ENCODE measurements at regions of chr7 and their contacts with region 1.

Region 1: DNA sequence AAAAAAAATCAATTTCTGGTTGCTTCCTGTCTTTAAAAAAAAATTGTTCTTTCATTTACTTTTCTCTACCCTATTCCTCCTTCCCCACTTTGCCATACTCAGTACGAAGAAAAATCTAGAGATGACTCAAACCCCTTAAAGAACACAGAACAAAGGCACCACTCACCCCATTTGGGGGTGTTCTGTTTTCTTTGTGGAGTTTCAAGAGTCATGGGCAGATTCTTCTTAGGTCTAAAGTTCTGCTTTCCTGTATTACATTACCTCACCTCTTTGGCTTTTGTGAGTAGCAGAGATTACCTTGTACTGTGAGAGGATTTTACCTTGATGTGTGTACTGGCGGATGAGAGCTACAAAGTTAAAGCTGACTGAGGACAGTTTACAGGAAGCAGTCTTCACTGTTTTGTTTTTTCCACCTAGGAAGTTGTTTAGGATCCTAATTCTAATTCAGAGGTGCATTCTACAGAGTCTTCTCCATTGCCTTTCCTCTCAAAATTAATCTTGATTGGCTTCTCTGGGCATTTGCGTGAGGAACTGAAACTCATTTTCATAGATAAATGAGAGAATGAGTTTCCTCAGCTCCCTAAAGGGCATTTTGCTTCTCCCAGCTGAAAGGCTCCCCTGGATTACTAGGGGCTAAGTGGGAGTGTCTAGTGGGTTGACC is 20.7 kb downstream of the AVL9 start:
- DNase-seq: peak; percentile 60
- H3K4me3 Mint-ChIP-seq: no peak overlapping the region
- H3K27ac Mint-ChIP-seq: peak overlapping the region; percentile 60
- H3K4me1 Mint-ChIP-seq: peaks cover 37% of the 10 kb centered on the region
- H3K27me3 Mint-ChIP-seq: no peaks in the 10 kb centered on the region

Region 2: GRCh38 chr7:31705377-31705776 is 810.6 kb before region 1 on chr7:
- intact Hi-C with region 1: no loop called
- DNase-seq: no peak
- H3K4me3 Mint-ChIP-seq: no peak overlapping the region
- H3K27ac Mint-ChIP-seq: no peak overlapping the region
- H3K4me1 Mint-ChIP-seq: no peaks in the 10 kb centered on the region
- H3K27me3 Mint-ChIP-seq: no peaks in the 10 kb centered on the region

Region 3: GRCh38 chr7:32490127-32490822 is 25.7 kb before region 1 on chr7 and contains the start of gene LSM5:
- intact Hi-C with region 1: no loop called
- DNase-seq: peak; percentile 97
- H3K4me3 Mint-ChIP-seq: peak within 1 kb of the TSS; percentile 91
- H3K27ac Mint-ChIP-seq: peak within 1 kb of the TSS; percentile 95
- H3K4me1 Mint-ChIP-seq: peaks cover 22% of the 10 kb centered on the region
- H3K27me3 Mint-ChIP-seq: no peaks in the 10 kb centered on the region
- total RNA-seq, gene LSM5: 92.9 and 99.2 TPM in 2 replicates

Region 4: GRCh38 chr7:32500922-32501341 is 15.1 kb before region 1 on chr7:
- intact Hi-C with region 1: loop called (anchors 2 kb)
- DNase-seq: no peak
- H3K4me3 Mint-ChIP-seq: peak overlapping the region; percentile 13
- H3K27ac Mint-ChIP-seq: peak overlapping the region; percentile 73
- H3K4me1 Mint-ChIP-seq: peaks cover 38% of the 10 kb centered on the region
- H3K27me3 Mint-ChIP-seq: no peaks in the 10 kb centered on the region

Measured in activated CD4-positive, alpha-beta T cell treated with anti-CD3 and anti-CD28 coated beads, Interleukin-2, amount 10 ng/mL, durations not matched to agents 24 days and 14 days (primary cell).